ENCODE measurements at regions of chr17 and their contacts with region 1.

Region 1: GRCh38 chr17:43911904-43912303 is 4.6 kb upstream of the MPP2 start:
- DNase-seq: no peak
- H3K4me3 ChIP-seq: no peak overlapping the region
- H3K27ac ChIP-seq: no peak overlapping the region
- H3K4me1 ChIP-seq: peaks cover 8% of the 10 kb centered on the region
- H3K27me3 ChIP-seq: peaks cover 17% of the 10 kb centered on the region
- CTCF ChIP-seq: no peak

Region 2: DNA sequence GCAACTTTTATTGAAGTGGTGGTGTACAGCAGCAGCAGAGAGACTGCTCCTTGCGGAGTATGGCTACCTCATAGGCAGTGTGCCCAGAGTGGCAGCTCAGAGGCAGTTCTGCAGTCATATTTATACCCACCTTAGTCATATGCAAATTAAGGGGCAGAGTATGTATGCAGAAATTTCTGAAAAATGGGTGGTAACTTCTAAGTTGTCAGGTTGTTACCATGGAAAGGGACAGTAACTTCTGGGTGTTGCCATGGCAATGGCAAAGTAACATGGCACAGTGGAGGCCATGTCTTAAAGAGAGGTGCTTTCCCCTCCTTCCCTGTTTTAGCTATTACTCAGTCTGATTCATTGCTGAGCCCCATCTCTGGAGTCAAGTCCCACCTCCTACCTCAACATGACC is 303.6 kb before region 1 on chr17:
- CTCF ChIA-PET with region 1: interaction called, 13 read pairs
- dilution Hi-C with region 1: no loop called
- in situ Hi-C with region 1: no loop called
- intact Hi-C with region 1: no loop called
- DNase-seq: peak; percentile 73
- H3K4me3 ChIP-seq: no peak overlapping the region
- H3K27ac ChIP-seq: no peak overlapping the region
- H3K4me1 ChIP-seq: peaks cover 4% of the 10 kb centered on the region
- H3K27me3 ChIP-seq: no peaks in the 10 kb centered on the region
- CTCF ChIP-seq: no peak

Region 3: DNA sequence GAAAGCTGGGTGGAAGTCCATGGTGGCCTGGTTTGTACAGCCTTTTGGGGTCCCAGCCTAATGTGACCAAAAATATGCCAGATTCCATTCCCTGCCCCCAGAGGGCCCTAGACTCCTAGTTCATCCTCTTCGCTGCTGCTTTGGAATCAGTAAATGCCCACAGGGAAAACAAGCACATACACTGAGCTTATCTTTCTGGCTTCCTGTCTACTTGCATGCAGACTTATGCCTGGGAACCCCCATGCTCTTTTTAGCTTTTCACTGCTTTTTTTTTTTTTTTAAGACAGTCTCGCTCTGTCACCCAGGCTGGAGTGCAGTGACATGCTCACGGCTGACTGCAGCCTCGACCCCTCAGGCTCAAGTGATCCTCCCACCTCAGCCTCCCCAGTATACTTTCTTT is 71.1 kb before region 1 on chr17:
- CTCF ChIA-PET with region 1: no interaction called
- dilution Hi-C with region 1: loop called (anchors 5 kb)
- in situ Hi-C with region 1: no loop called
- intact Hi-C with region 1: no loop called
- DNase-seq: no peak
- H3K4me3 ChIP-seq: no peak overlapping the region
- H3K27ac ChIP-seq: no peak overlapping the region
- H3K4me1 ChIP-seq: peaks cover 31% of the 10 kb centered on the region
- H3K27me3 ChIP-seq: no peaks in the 10 kb centered on the region
- CTCF ChIP-seq: no peak

Region 4: GRCh38 chr17:43888548-43888947 is 23.4 kb before region 1 on chr17:
- CTCF ChIA-PET with region 1: no interaction called
- dilution Hi-C with region 1: no loop called
- in situ Hi-C with region 1: no loop called
- intact Hi-C with region 1: no loop called
- DNase-seq: no peak
- H3K4me3 ChIP-seq: no peak overlapping the region
- H3K27ac ChIP-seq: no peak overlapping the region
- H3K4me1 ChIP-seq: no peaks in the 10 kb centered on the region
- H3K27me3 ChIP-seq: peaks cover 2% of the 10 kb centered on the region
- CTCF ChIP-seq: no peak